Body of pancreas (tissue), 4 donors: ENCODE measurements at regions of chr20 and their contacts with region 1.

Region 1: GRCh38 chr20:2838170-2838797 is 2.2 kb downstream of the PCED1A start:
- DNase-seq: no peak
- ATAC-seq: no peak
- H3K4me3 ChIP-seq: no peak overlapping the region
- H3K27ac ChIP-seq: no peak overlapping the region
- H3K4me1 ChIP-seq: peaks cover 21% of the 10 kb centered on the region
- H3K27me3 ChIP-seq: no peaks in the 10 kb centered on the region
- CTCF ChIP-seq: no peak
- POLR2A ChIP-seq: no peak

Region 2: GRCh38 chr20:2451939-2452732 is 386.1 kb before region 1 on chr20:
- intact Hi-C with region 1: no loop called
- DNase-seq: peak; percentile 76 to 79 (median 78)
- ATAC-seq: peak; percentile 76
- H3K4me3 ChIP-seq: no peak overlapping the region
- H3K27ac ChIP-seq: no peak overlapping the region
- H3K4me1 ChIP-seq: no peaks in the 10 kb centered on the region
- H3K27me3 ChIP-seq: no peaks in the 10 kb centered on the region
- CTCF ChIP-seq: peak; percentile 71 to 83 (median 78)
- POLR2A ChIP-seq: no peak

Region 3: GRCh38 chr20:2470423-2471193 is 367.7 kb before region 1 on chr20 and contains the start of gene SNRPB:
- intact Hi-C with region 1: loop called (anchors 10 kb)
- DNase-seq: peak; percentile 97 to 98 (median 98)
- ATAC-seq: peak; percentile 99
- H3K4me3 ChIP-seq: peak within 1 kb of the TSS; percentile 38 to 46
- H3K27ac ChIP-seq: peak within 1 kb of the TSS; percentile 79 to 90 (median 88)
- H3K4me1 ChIP-seq: peaks cover 23% of the 10 kb centered on the region
- H3K27me3 ChIP-seq: no peaks in the 10 kb centered on the region
- CTCF ChIP-seq: peak in 2 of 7 experiments; percentile 4 to 10
- POLR2A ChIP-seq: peak; percentile 75 to 96 (median 94)
- total RNA-seq, gene SNRPB: 53.1 to 61.0 TPM